CD4-positive, alpha-beta T cell (primary cell): ENCODE measurements at regions of chr9 and their contacts with region 1.

Region 1: GRCh38 chr9:68595868-68596267 is 55.2 kb upstream of the TMEM252 start:
- DNase-seq: no peak
- ATAC-seq: no peak
- H3K4me3 ChIP-seq: no peak overlapping the region
- H3K4me3 Mint-ChIP-seq: no peak overlapping the region
- H3K27ac ChIP-seq: no peak overlapping the region
- H3K27ac Mint-ChIP-seq: no peak overlapping the region
- H3K4me1 ChIP-seq: no peaks in the 10 kb centered on the region
- H3K4me1 Mint-ChIP-seq: no peaks in the 10 kb centered on the region
- H3K27me3 ChIP-seq: no peaks in the 10 kb centered on the region
- H3K27me3 Mint-ChIP-seq: peaks cover 23% of the 10 kb centered on the region
- CTCF ChIP-seq: no peak

Region 2: GRCh38 chr9:68530618-68531017 is 65.2 kb before region 1 on chr9:
- CTCF ChIA-PET with region 1: no interaction called
- POLR2A ChIA-PET with region 1: no interaction called
- intact Hi-C with region 1: no loop called
- DNase-seq: no peak
- ATAC-seq: no peak
- H3K4me3 ChIP-seq: no peak overlapping the region
- H3K4me3 Mint-ChIP-seq: no peak overlapping the region
- H3K27ac ChIP-seq: no peak overlapping the region
- H3K27ac Mint-ChIP-seq: no peak overlapping the region
- H3K4me1 ChIP-seq: no peaks in the 10 kb centered on the region
- H3K4me1 Mint-ChIP-seq: no peaks in the 10 kb centered on the region
- H3K27me3 ChIP-seq: no peaks in the 10 kb centered on the region
- H3K27me3 Mint-ChIP-seq: peaks cover 4% of the 10 kb centered on the region
- CTCF ChIP-seq: no peak

Region 3: DNA sequence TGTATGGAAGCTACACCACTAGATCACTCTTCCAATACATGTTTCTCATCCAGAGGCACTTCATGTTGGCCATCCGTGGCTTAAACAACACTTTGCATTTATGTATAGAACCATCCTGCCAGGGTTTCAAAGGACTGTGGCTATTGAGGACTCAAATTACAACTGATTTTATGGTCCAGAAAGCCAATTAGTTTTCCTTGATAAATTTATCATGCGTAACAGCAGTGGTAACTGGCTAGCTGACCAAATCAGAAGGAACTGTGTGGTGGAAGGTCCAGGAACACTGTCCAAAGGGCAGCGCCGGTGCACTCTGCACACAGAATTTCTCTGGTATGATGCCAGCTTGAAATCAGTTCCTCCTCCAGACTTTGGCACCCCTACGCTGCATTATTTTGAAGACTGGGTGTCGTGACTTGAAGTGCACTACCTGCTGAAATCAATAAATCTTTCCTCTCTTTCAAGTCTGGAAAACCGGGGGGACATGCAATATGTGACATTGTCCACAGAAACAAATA is 14.1 kb after region 1 on chr9:
- CTCF ChIA-PET with region 1: no interaction called
- POLR2A ChIA-PET with region 1: no interaction called
- intact Hi-C with region 1: loop called in 1 of 2 experiments (anchors 1 kb)
- DNase-seq: no peak
- ATAC-seq: no peak
- H3K4me3 ChIP-seq: no peak overlapping the region
- H3K4me3 Mint-ChIP-seq: no peak overlapping the region
- H3K27ac ChIP-seq: no peak overlapping the region
- H3K27ac Mint-ChIP-seq: no peak overlapping the region
- H3K4me1 ChIP-seq: no peaks in the 10 kb centered on the region
- H3K4me1 Mint-ChIP-seq: no peaks in the 10 kb centered on the region
- H3K27me3 ChIP-seq: no peaks in the 10 kb centered on the region
- H3K27me3 Mint-ChIP-seq: peaks cover 8% of the 10 kb centered on the region
- CTCF ChIP-seq: no peak